ENCODE measurements at regions of chr12 and their contacts with region 1.

Region 1: DNA sequence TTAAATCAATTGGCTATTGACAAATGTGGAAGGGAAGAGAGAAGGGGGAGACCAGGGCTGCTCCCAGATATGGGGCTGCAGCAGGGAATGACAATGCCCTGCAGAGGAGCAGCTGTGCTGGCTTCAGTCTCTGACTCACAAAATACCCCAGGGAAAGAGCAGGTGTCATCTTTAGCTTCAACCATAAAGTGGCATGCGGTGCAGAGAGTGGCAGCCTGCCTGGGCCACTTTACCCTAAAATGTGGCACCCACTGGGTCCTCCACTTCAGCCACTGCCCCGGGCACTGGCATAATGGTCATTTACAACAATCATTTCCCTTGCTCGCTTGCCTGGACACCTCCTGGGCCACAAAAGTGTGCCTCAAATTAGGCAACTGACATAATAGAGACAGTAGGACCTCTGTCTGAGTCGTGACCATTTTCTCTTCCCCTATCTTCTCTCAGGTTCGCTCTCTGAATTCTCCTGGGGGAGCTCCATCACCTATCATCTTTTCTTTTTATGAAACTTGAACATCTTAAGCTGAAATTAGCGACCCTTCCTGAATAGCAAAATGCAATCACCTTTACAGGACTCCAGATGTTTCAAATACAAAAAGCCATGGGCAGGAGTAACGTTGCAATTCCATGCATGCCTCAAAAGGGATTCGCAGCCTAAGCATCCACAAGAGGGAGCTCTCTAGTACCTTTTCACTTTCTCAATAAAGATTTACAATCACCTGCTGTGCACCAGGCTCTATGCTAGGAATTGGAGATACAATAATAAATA is 179.9 kb upstream of the ATF7IP start:
- DNase-seq: peak; percentile 34 to 59 (median 47)
- H3K4me3 ChIP-seq: no peak overlapping the region
- H3K27ac ChIP-seq: no peak overlapping the region
- H3K4me1 ChIP-seq: no peaks in the 10 kb centered on the region
- H3K27me3 ChIP-seq: peaks cover 0 to 2% (median 0%) of the 10 kb centered on the region in 5 experiments

Region 2: DNA sequence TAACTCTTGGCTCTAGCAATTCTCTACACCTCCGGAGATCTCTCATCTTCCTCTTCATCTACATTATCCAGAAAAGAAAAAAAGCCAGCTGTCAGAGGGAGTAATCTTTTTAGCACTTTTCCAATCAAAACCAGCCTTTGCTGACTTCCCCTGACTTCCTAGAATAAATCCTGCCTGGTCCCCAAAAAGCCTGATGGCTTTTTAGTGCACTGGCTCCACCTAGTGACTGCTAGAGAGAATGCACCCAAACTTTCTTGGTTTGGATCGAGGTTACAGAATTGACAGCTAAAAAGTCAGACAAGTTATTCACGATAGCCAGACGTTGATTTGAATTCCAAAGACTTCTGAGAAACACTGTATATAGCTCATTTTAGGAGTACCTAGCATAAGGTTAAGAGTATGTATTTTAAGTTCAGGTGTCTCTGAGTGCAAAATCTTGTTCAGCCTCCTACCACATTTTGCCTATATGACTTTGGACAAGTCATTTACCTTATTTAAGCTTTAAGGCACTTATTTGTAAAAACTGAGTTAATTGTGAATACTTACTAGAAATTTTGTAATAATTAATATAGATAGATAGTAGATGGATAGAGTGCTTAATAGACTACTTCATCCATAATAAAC is 18.5 kb before region 1 on chr12:
- CTCF ChIA-PET with region 1: interaction called, 13 read pairs
- POLR2A ChIA-PET with region 1: no interaction called
- DNase-seq: peak; percentile 45 to 61 (median 47)
- H3K4me3 ChIP-seq: no peak overlapping the region
- H3K27ac ChIP-seq: no peak overlapping the region
- H3K4me1 ChIP-seq: peaks cover 0 to 5% (median 0%) of the 10 kb centered on the region in 4 experiments
- H3K27me3 ChIP-seq: no peaks in the 10 kb centered on the region

Region 3: GRCh38 chr12:14454098-14454907 is 268.7 kb after region 1 on chr12:
- CTCF ChIA-PET with region 1: interaction called, 15 read pairs
- POLR2A ChIA-PET with region 1: no interaction called
- DNase-seq: peak; percentile 79 to 87 (median 83)
- H3K4me3 ChIP-seq: no peak overlapping the region
- H3K27ac ChIP-seq: no peak overlapping the region
- H3K4me1 ChIP-seq: peaks cover 0 to 6% (median 0%) of the 10 kb centered on the region in 4 experiments
- H3K27me3 ChIP-seq: no peaks in the 10 kb centered on the region

Region 4: GRCh38 chr12:14635776-14636175 is 450.2 kb after region 1 on chr12:
- CTCF ChIA-PET with region 1: no interaction called
- POLR2A ChIA-PET with region 1: no interaction called
- DNase-seq: no peak
- H3K4me3 ChIP-seq: no peak overlapping the region
- H3K27ac ChIP-seq: no peak overlapping the region
- H3K4me1 ChIP-seq: no peaks in the 10 kb centered on the region
- H3K27me3 ChIP-seq: peaks cover 0 to 38% (median 12%) of the 10 kb centered on the region in 5 experiments